PC-9 (cell line): ENCODE measurements at regions of chr19 and their contacts with region 1.

Region 1: GRCh38 chr19:14006243-14006765 is at the start of gene RFX1:
- DNase-seq: peak; percentile 99 to 100
- H3K4me3 ChIP-seq: peak within 1 kb of the TSS; percentile 65
- H3K27ac ChIP-seq: peak within 1 kb of the TSS; percentile 82
- H3K4me1 ChIP-seq: peaks cover 6% of the 10 kb centered on the region
- H3K27me3 ChIP-seq: no peaks in the 10 kb centered on the region
- CTCF ChIP-seq: no peak
- total RNA-seq, gene RFX1: 20.6 and 25.5 TPM in 2 replicates

Region 2: GRCh38 chr19:13839130-13839937 is 167.0 kb before region 1 on chr19:
- CTCF ChIA-PET with region 1: interaction called, 18 read pairs
- POLR2A ChIA-PET with region 1: no interaction called
- intact Hi-C with region 1: no loop called
- DNase-seq: peak; percentile 86 to 89
- H3K4me3 ChIP-seq: peak overlapping the region; percentile 61
- H3K27ac ChIP-seq: peak overlapping the region; percentile 97
- H3K4me1 ChIP-seq: peaks cover 72% of the 10 kb centered on the region
- H3K27me3 ChIP-seq: no peaks in the 10 kb centered on the region
- CTCF ChIP-seq: no peak

Region 3: GRCh38 chr19:13981021-13981420 is 25.3 kb before region 1 on chr19:
- CTCF ChIA-PET with region 1: no interaction called
- POLR2A ChIA-PET with region 1: no interaction called
- intact Hi-C with region 1: no loop called
- DNase-seq: no peak
- H3K4me3 ChIP-seq: no peak overlapping the region
- H3K27ac ChIP-seq: no peak overlapping the region
- H3K4me1 ChIP-seq: no peaks in the 10 kb centered on the region
- H3K27me3 ChIP-seq: no peaks in the 10 kb centered on the region
- CTCF ChIP-seq: no peak

Region 4: GRCh38 chr19:14031719-14032480 is 25.6 kb after region 1 on chr19 and contains the start of gene IL27RA:
- CTCF ChIA-PET with region 1: no interaction called
- POLR2A ChIA-PET with region 1: interaction called, 12 read pairs
- intact Hi-C with region 1: no loop called
- DNase-seq: peak; percentile 48 to 56
- H3K4me3 ChIP-seq: peak within 1 kb of the TSS; percentile 88
- H3K27ac ChIP-seq: 0 out of 2 replicates have a peak within 1 kb of the TSS, but pooled peaks have one; percentile 12
- H3K4me1 ChIP-seq: no peaks in the 10 kb centered on the region; the same call in 1 of the 2 replicates
- H3K27me3 ChIP-seq: no peaks in the 10 kb centered on the region
- CTCF ChIP-seq: peak; percentile 86
- total RNA-seq, gene IL27RA: 7.8 and 11.9 TPM in 2 replicates

Region 5: DNA sequence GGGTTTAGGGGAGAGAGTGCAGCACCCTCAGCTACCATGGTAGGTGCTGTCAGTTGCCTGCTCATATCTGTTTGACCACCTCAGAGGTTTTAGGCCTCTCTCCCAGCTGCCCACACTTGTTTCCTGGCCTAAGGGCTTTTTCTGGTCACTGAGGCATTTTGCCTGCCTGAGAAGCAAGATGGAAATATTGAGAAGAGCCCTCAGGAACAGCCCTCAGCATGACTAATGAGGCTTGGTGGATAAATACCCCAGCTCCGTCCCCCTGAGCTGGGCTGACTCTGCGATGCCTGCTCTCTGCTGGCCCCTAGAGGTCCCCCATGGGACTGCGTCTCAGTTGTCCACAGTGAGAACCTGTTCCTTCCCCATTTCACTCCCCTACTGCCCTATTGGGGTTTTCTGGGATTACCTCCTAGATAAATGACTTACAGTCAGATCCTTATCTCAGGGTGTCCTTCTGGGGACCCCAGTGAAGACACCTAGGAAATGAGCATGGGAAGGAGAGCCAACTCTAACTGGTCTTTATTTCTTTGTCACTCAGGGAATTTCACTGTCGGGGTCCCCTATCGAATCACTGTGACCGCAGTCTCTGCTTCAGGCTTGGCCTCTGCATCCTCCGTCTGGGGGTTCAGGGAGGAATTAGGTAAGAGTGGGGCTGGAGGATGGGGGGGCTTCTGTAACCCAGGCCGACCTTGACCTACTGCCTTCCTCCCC is 42.3 kb after region 1 on chr19:
- CTCF ChIA-PET with region 1: no interaction called
- POLR2A ChIA-PET with region 1: no interaction called
- intact Hi-C with region 1: no loop called
- DNase-seq: peak; percentile 56 to 58
- H3K4me3 ChIP-seq: no peak overlapping the region
- H3K27ac ChIP-seq: no peak overlapping the region
- H3K4me1 ChIP-seq: no peaks in the 10 kb centered on the region
- H3K27me3 ChIP-seq: no peaks in the 10 kb centered on the region
- CTCF ChIP-seq: peak; percentile 95

Region 6: DNA sequence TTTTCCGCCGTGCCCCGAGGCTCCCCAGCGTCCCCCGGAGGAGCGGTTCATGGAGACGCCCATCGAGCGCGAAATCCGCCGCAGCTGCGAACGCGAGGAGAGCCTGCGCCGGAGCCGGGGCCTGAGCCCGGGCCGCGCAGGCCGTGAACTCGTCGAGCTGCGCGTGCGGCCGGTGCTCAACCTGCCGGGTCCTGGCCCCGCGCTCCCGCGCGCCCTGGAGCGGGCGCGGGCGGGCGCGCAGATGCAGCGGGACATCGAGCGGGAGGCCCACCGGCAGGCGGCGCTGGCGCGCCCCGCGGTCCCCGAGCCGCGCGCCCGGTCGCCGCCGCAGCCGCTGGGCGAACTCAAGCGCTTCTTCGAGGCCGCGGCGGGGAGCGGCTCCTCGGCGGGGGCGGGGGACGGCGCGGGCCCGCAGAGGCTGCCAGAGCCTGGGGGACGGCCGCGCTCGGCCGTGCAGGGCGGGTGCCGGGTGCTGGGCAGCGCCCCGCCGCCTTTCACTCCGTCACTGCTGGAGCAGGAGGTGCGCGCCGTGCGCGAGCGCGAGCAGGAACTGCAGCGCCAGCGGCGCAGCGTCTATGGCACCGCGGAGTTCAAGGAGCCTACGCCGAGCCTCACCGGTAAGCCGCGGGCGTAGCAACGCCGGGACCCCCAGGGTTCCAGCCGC is 67.1 kb after region 1 on chr19:
- CTCF ChIA-PET with region 1: interaction called, 4 read pairs
- POLR2A ChIA-PET with region 1: interaction called, 3 read pairs
- intact Hi-C with region 1: loop called (anchors 2 kb)
- DNase-seq: peak; percentile 61 to 78
- H3K4me3 ChIP-seq: peak overlapping the region; percentile 72
- H3K27ac ChIP-seq: no peak overlapping the region
- H3K4me1 ChIP-seq: 0 out of 2 replicates have a peak, but pooled peaks cover 10% of the 10 kb centered on the region
- H3K27me3 ChIP-seq: no peaks in the 10 kb centered on the region
- CTCF ChIP-seq: no peak

Region 7: DNA sequence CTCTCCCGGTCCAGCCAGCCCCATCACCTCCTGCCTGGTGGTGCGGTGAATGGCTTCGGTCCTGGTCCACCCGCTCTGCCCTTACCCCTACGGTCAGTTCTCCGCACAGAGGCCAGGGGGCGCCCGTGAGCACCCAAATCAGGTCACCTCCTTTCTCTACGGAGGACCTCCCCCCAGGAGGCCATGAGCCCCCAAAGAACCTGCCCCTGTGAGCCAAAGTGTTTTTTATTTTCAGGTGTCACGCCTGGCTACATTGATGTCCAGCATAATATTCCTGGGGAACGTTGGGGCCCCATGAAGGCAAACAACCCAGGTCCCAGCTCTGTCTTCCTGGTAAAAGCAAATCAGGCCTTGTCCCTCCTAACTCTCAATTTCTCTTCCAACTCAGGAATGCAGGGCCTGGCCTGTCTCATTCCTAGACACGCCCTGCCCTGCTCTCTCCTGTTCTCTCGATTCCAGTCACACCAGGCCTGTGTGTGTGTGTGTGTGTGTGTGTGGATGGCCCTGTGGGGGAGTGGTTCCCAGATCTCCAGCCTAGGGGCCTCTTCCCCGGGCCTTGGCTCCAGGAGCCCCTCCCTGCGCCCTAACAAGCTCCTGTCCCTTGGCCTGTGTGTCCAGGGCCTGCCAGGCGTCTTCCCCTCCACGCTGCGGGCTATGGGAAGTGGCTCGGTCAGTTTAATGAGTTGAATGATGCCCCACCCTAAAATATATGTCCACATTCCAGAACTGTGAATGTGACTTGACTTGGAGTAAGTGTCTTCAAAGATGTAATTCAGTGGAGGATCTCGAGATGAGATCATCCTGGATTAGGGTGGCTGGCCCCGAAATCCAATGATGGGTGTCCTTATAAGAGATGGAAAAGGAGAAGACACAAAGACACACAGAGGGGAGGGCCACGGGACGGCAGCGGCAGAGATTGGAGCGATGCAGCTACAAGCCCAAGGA is 499.5 kb after region 1 on chr19:
- CTCF ChIA-PET with region 1: no interaction called
- POLR2A ChIA-PET with region 1: no interaction called
- intact Hi-C with region 1: loop called (anchors 5 kb)
- DNase-seq: peak; percentile 97 to 100
- H3K4me3 ChIP-seq: peak overlapping the region; percentile 45; the same call in 1 of the 2 replicates
- H3K27ac ChIP-seq: peak overlapping the region; percentile 99
- H3K4me1 ChIP-seq: peaks cover 84% of the 10 kb centered on the region
- H3K27me3 ChIP-seq: no peaks in the 10 kb centered on the region
- CTCF ChIP-seq: peak; percentile 99